Activated CD4-positive, alpha-beta memory T cell treated with anti-CD3 and anti-CD28 coated beads for 36 hours (primary cell): ENCODE measurements at regions of chr5 and their contacts with region 1.

Region 1: GRCh38 chr5:139745800-139746690 is 49.6 kb upstream of the PSD2 start:
- DNase-seq: peak; percentile 64
- H3K4me3 Mint-ChIP-seq: peak overlapping the region; percentile 14
- H3K27ac Mint-ChIP-seq: no peak overlapping the region
- H3K4me1 Mint-ChIP-seq: peaks cover 21% of the 10 kb centered on the region
- H3K27me3 Mint-ChIP-seq: peaks cover 10% of the 10 kb centered on the region

Region 2: GRCh38 chr5:139403787-139404483 is 342.1 kb before region 1 on chr5 and contains the start of gene SPATA24:
- CTCF ChIA-PET with region 1: no interaction called
- POLR2A ChIA-PET with region 1: no interaction called
- intact Hi-C with region 1: loop called (anchors 5 kb)
- DNase-seq: peak; percentile 100
- H3K4me3 Mint-ChIP-seq: peak within 1 kb of the TSS; percentile 91
- H3K27ac Mint-ChIP-seq: peak within 1 kb of the TSS; percentile 99
- H3K4me1 Mint-ChIP-seq: peaks cover 34% of the 10 kb centered on the region
- H3K27me3 Mint-ChIP-seq: no peaks in the 10 kb centered on the region
- total RNA-seq, gene SPATA24: 3.7 to 5.2 TPM

Region 3: GRCh38 chr5:139711067-139711905 is 34.8 kb before region 1 on chr5:
- CTCF ChIA-PET with region 1: interaction called, 4 read pairs
- POLR2A ChIA-PET with region 1: interaction called, 7 read pairs
- intact Hi-C with region 1: loop called (anchors 2 kb)
- DNase-seq: peak; percentile 74
- H3K4me3 Mint-ChIP-seq: peak overlapping the region; percentile 53
- H3K27ac Mint-ChIP-seq: no peak overlapping the region
- H3K4me1 Mint-ChIP-seq: peaks cover 12% of the 10 kb centered on the region
- H3K27me3 Mint-ChIP-seq: peaks cover 14% of the 10 kb centered on the region

Region 4: DNA sequence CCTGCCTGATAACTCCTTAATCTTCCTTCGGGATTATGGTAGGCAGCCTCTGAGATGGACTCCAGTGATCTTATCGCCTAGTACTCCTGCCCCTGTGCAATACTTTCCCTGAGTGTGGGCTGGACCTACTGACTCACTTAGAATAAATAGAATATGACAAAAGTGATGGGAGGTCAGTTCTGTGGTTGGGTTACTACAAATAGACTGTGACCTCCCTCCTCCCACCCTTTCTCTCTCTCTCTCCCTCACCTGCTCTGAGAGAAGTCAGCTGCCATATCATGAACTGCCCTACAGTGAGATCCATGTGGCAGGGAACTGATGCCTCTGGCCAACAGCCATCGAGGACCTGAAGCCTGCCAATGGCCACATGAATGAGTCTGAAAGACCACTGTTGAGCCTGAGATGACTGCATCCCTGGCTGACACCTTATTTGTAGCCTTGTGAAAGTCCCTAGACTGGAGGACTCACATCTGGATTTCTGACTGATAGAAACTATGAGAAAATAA is 265.3 kb after region 1 on chr5:
- CTCF ChIA-PET with region 1: no interaction called
- POLR2A ChIA-PET with region 1: no interaction called
- intact Hi-C with region 1: no loop called
- DNase-seq: no peak
- H3K4me3 Mint-ChIP-seq: no peak overlapping the region
- H3K27ac Mint-ChIP-seq: no peak overlapping the region
- H3K4me1 Mint-ChIP-seq: no peaks in the 10 kb centered on the region
- H3K27me3 Mint-ChIP-seq: peaks cover 6% of the 10 kb centered on the region